Keratinocyte (primary cell): ENCODE measurements at regions of chr3 and their contacts with region 1.

Region 1: GRCh38 chr3:133821767-133822638 is 16.4 kb downstream of the SRPRB start:
- DNase-seq: peak; percentile 73
- H3K4me3 ChIP-seq: no peak overlapping the region
- H3K27ac ChIP-seq: no peak overlapping the region
- H3K4me1 ChIP-seq: peaks cover 29% of the 10 kb centered on the region
- H3K27me3 ChIP-seq: no peaks in the 10 kb centered on the region
- CTCF ChIP-seq: peak; percentile 53 to 77 (median 67)

Region 2: DNA sequence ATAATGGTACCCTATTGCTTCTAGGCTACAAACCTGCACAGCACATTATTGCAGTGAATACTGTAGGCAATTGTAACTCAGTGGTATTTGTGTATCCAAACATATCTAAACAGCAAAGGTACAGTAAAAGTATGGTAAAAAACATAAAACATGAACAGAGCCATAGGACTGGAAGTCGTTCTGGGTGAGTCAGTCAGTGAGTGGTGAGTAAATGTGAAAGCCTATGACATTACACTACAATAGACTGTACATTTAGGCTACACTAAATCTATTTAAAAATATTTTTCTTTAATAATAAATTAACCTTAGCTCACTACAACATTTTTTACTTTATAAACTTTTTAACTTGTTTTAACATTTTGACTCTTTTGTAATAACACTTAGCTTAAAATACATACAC is 52.3 kb after region 1 on chr3:
- dilution Hi-C with region 1: loop called (anchors 5 kb)
- DNase-seq: no peak
- H3K4me3 ChIP-seq: no peak overlapping the region
- H3K27ac ChIP-seq: no peak overlapping the region
- H3K4me1 ChIP-seq: no peaks in the 10 kb centered on the region
- H3K27me3 ChIP-seq: peaks cover 13% of the 10 kb centered on the region
- CTCF ChIP-seq: no peak